A549 (cell line): ENCODE measurements at regions of chr17 and their contacts with region 1.

Region 1: DNA sequence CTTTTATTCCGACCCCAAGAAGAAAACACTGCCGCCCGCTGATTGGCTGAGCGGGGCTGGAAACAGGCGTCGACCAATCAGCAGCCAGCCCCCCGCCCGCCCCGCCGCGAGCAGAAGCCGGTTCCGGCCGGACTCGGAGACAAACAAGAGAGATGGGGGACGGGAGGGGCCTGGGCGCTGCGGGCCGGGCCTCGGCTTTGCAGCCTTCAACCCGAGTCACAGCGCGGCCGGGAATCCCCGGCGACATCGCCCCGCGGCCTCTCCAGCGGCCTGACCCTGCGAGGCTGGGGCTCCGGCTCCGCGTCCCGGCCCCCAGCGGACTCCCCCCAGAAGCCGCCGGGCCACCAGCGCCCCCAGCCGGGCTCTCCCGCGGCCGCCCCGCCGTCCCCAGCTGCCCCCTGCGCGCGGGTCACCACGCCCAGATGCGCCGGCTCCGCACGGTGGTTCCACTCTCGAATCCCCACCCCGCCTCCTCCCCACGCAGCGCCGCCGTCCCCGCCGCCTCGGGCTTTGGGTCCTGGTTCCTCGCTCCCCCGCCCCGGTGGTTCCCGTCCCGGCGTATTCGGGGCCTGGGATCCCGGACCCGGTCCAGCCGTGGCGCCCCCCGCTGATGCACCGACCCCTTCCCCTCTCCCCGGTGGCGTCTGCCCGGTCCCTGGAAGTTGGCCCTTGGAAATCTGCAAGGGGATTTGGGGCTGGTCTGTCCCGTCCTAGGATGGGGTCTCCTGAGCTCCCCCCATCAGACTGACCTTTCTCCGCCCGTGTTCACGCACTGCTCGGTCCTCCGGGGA is 417 bp upstream of the SLC43A2 start:
- DNase-seq: peak; percentile 97 to 100
- ATAC-seq: peak; percentile 85 to 88
- H3K4me3 ChIP-seq: peak overlapping the region; percentile 71
- H3K27ac ChIP-seq: peak overlapping the region; percentile 80 to 88
- H3K4me1 ChIP-seq: 0 out of 3 replicates have a peak, but pooled peaks cover 4% of the 10 kb centered on the region
- CTCF ChIP-seq: peak; percentile 62
- EP300 ChIP-seq: no peak
- POLR2A ChIP-seq: peak; percentile 59
- RAD21 ChIP-seq: peak; percentile 38 to 84; a peak in 4 of 5 replicates

Region 2: GRCh38 chr17:1467898-1468492 is 161.1 kb before region 1 on chr17:
- CTCF ChIA-PET with region 1: no interaction called
- POLR2A ChIA-PET with region 1: no interaction called
- DNase-seq: no peak
- ATAC-seq: no peak
- H3K4me3 ChIP-seq: no peak overlapping the region
- H3K27ac ChIP-seq: no peak overlapping the region
- H3K4me1 ChIP-seq: no peaks in the 10 kb centered on the region
- CTCF ChIP-seq: no peak
- EP300 ChIP-seq: no peak
- POLR2A ChIP-seq: no peak
- RAD21 ChIP-seq: no peak

Region 3: DNA sequence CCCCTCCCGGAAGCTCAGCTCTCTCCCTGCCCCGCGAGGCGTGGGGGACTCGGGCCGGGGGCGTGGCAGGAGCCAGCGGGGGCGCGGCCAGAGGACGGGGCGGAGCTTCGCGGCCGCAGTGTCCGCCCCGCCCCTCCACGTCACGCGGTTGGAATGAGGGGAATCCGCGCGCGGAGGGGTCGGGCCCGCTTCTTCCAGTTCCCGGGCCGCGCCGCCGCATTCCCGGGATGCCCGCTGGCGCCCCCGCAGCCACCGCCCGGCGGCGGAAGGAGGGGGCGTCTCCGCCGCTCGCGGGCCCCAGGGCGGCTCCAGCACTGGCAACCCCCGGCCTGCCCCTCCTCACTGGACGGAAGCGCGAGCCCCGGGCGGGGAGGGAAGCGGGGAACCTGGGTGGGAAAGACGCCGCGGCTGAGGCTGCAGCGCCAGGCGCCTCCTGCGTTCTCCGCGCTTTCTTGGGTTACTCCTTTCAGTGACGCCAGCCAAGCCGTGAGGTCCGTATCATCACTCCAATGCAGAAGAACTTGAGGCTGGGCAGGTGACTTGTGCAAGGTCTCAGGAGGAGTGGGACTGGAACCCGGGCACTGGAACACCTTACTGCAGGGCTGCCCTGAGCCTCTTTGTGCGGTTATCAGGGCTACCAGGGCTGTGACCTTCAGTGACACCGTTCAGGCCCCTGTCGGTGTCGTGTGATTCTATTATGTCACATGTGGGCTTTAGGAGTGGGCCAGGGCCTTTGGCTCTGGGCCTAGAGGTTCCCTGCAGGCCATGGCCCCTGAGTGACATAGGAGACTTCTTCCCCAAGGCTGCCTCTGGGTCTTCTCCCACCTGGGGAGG is 140.8 kb before region 1 on chr17:
- CTCF ChIA-PET with region 1: interaction called, 11 read pairs
- POLR2A ChIA-PET with region 1: interaction called, 6 read pairs
- DNase-seq: peak; percentile 74 to 90
- ATAC-seq: peak; percentile 17 to 39
- H3K4me3 ChIP-seq: peak overlapping the region; percentile 82
- H3K27ac ChIP-seq: peak overlapping the region; percentile 97
- H3K4me1 ChIP-seq: peaks cover 61% of the 10 kb centered on the region
- CTCF ChIP-seq: 0 out of 3 replicates have a peak, but pooled peaks have one; percentile 16
- EP300 ChIP-seq: 0 out of 5 replicates have a peak, but pooled peaks of 1 of the 2 experiments have one; percentile 16
- POLR2A ChIP-seq: peak; percentile 31; the same call in 1 of the 2 replicates
- RAD21 ChIP-seq: no peak

Region 4: DNA sequence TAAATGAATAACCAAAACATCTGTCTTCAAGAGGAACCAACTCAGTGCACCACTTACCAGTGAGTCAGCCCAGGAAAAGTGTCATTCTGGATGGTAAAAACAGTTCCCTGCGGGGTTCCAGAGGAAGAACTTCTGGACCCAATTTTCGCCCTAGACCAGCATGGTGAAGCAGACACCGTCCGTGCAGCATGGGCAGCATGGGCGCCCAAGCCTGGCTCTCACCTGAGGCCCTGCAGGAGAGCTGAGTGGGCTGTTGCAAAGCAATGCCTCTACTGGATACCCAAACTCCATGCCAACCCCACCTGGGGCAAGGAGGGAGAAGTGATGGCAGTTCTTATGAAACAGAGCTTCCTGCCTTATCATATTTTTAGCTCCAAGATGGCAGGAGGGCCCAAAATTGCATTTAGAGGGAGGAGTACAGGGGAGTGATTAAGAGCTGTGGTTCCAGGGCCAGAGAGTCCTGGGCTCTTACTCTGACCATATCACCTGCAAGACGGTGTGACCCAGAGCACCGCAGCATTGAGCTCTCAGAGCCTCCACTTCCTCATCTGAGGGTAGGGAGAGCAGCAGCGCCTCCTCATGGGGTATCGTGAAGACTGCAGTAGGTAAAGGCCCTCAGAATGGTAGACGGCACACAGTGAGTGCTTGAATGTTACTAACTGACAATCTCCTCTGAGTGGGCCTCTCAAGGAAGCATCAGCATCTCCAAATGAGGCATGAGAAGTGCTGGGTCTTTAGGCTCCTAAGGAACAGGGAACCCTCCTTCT is 96.0 kb before region 1 on chr17:
- CTCF ChIA-PET with region 1: interaction called, 12 read pairs
- POLR2A ChIA-PET with region 1: no interaction called
- DNase-seq: peak in 1 of 2 experiments; percentile 62
- ATAC-seq: peak; percentile 63 to 84; a peak in 5 of 6 replicates
- H3K4me3 ChIP-seq: no peak overlapping the region
- H3K27ac ChIP-seq: no peak overlapping the region
- H3K4me1 ChIP-seq: peaks cover 3% of the 10 kb centered on the region; the same call in 1 of the 3 replicates
- CTCF ChIP-seq: peak; percentile 25; the same call in 1 of the 3 replicates
- EP300 ChIP-seq: no peak
- POLR2A ChIP-seq: no peak
- RAD21 ChIP-seq: peak in 1 of 2 experiments; percentile 35; a peak in 2 of 5 replicates

Region 5: GRCh38 chr17:1573916-1574696 is 54.9 kb before region 1 on chr17:
- CTCF ChIA-PET with region 1: interaction called, 497 read pairs
- POLR2A ChIA-PET with region 1: interaction called, 49 read pairs
- DNase-seq: peak; percentile 82 to 92
- ATAC-seq: peak; percentile 73 to 87
- H3K4me3 ChIP-seq: no peak overlapping the region
- H3K27ac ChIP-seq: peak overlapping the region in 1 of 2 experiments; percentile 65; a peak in 3 of 6 replicates
- H3K4me1 ChIP-seq: peaks cover 17% of the 10 kb centered on the region
- CTCF ChIP-seq: peak; percentile 98
- EP300 ChIP-seq: no peak
- POLR2A ChIP-seq: no peak
- RAD21 ChIP-seq: peak; percentile 95 to 100

Region 6: GRCh38 chr17:1590031-1590748 is 38.9 kb before region 1 on chr17:
- CTCF ChIA-PET with region 1: interaction called, 40 read pairs
- POLR2A ChIA-PET with region 1: interaction called, 13 read pairs
- DNase-seq: peak; percentile 90 to 99
- ATAC-seq: peak; percentile 88 to 93
- H3K4me3 ChIP-seq: peak overlapping the region; percentile 22; the same call in 1 of the 3 replicates
- H3K27ac ChIP-seq: peak overlapping the region; percentile 76 to 84
- H3K4me1 ChIP-seq: peaks cover 42% of the 10 kb centered on the region
- CTCF ChIP-seq: no peak
- EP300 ChIP-seq: no peak
- POLR2A ChIP-seq: no peak
- RAD21 ChIP-seq: no peak; a peak in 2 of 5 replicates

Region 7: GRCh38 chr17:1617620-1618174 is 11.4 kb before region 1 on chr17:
- CTCF ChIA-PET with region 1: interaction called, 116 read pairs
- POLR2A ChIA-PET with region 1: interaction called, 20 read pairs
- DNase-seq: peak; percentile 80 to 88
- ATAC-seq: peak; percentile 86 to 88
- H3K4me3 ChIP-seq: no peak overlapping the region
- H3K27ac ChIP-seq: peak overlapping the region; percentile 83 to 84
- H3K4me1 ChIP-seq: peaks cover 17% of the 10 kb centered on the region
- CTCF ChIP-seq: peak; percentile 48
- EP300 ChIP-seq: no peak
- POLR2A ChIP-seq: no peak
- RAD21 ChIP-seq: peak; percentile 46 to 48; a peak in 4 of 5 replicates

Region 8: DNA sequence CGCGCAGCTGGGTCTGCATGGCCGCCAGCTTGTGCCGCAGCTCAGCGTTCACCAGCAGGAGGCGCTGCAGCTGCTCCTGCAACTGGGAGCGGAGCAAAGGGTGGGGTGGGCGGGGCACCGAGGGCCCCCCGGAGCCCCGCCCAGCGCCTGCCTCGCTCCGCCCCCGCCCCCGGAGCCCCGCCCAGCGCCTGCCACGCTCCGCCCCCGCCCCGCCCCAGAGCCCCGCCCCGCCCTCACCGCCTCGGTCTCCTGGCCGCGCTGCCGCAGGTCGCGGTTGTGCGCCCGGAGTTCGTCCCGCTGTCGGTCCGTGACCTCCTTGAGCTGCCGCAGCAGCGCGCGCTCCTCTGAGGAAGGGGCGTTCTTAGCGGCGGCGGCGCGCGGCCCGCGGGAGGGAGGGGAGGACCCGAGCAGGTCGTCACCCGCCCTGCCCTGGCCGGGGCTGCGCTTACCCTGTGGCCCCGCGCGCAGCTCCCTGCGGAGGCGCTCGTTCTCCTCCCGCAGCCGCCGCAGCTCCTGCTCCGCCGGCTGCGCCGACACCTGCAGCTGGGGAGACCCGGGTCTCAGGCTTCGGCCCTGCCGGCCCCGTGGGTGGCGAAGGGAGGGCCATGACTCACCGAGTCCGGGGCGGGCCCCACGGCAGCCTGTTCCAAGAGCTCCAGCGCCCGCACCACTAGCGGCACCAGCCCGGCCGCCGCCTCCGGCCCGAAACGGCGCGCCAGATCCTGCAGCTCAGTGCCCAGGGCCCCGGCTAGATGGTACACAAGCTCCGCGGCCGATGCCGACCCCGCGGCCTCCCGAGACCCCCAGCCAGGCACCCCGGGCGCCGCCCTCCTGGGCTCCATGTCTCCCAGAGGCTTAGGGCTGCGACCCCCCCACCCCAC is 20.2 kb after region 1 on chr17:
- CTCF ChIA-PET with region 1: interaction called, 115 read pairs
- POLR2A ChIA-PET with region 1: interaction called, 12 read pairs
- DNase-seq: peak; percentile 88 to 97
- ATAC-seq: peak; percentile 61 to 74
- H3K4me3 ChIP-seq: peak overlapping the region; percentile 54
- H3K27ac ChIP-seq: peak overlapping the region; percentile 85 to 89
- H3K4me1 ChIP-seq: peaks cover 30% of the 10 kb centered on the region
- CTCF ChIP-seq: peak; percentile 99
- EP300 ChIP-seq: no peak
- POLR2A ChIP-seq: peak; percentile 85
- RAD21 ChIP-seq: peak; percentile 65 to 86